ENCODE measurements at regions of chr4 and their contacts with region 1.

Region 1: DNA sequence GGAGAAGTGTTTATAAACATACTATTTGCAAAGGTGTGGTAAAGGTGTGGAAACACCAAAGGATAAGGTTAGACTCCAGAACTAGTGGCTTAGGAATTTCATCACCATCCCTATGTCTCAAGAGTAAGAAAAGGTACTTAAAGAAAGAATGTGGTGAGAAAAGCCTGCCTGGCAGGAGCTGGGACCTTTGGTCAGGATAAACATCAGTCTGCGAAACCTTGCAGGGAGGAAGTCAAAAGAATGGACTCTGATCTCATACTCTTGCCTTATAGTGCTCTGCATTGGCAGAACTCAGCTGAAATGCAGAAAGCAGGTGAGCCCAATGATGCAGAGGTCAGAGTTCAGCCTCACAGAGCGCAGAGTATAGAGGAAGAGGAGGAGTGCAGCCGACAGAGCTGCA is 97.2 kb upstream of the NR3C2 start:
- DNase-seq: no peak
- ATAC-seq: no peak
- H3K4me3 ChIP-seq: no peak overlapping the region
- H3K4me3 Mint-ChIP-seq: no peak overlapping the region
- H3K27ac ChIP-seq: no peak overlapping the region
- H3K27ac Mint-ChIP-seq: no peak overlapping the region
- H3K4me1 ChIP-seq: no peaks in the 10 kb centered on the region
- H3K4me1 Mint-ChIP-seq: no peaks in the 10 kb centered on the region
- H3K27me3 ChIP-seq: no peaks in the 10 kb centered on the region
- H3K27me3 Mint-ChIP-seq: no peaks in the 10 kb centered on the region

Region 2: DNA sequence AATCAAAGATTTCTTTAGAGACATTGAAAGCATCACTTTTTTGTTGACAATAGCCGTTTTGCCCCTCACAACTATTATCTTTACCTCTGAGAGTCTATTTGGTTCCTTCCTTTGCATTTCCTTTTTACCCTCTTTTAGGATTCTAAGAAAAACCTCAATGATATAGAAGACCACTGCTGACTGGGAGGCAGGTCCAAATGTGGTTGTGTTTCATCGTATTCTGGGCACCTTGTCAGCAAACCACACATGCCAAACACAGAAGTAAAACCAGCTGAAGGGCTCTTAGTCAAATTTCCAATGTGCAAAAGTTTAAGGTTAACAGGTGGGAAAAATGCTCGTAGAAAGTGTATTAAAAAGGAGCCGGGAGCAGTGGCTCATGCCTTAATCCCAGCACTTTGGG is 850.3 kb before region 1 on chr4:
- CTCF ChIA-PET with region 1: no interaction called
- POLR2A ChIA-PET with region 1: interaction called in 1 of 2 experiments, 17 read pairs
- DNase-seq: no peak
- ATAC-seq: no peak
- H3K4me3 ChIP-seq: no peak overlapping the region
- H3K4me3 Mint-ChIP-seq: no peak overlapping the region
- H3K27ac ChIP-seq: peak overlapping the region; percentile 12
- H3K27ac Mint-ChIP-seq: peak overlapping the region; percentile 16 to 37
- H3K4me1 ChIP-seq: peaks cover 0 to 3% of the 10 kb centered on the region in 2 experiments
- H3K4me1 Mint-ChIP-seq: peaks cover 0 to 14% (median 9%) of the 10 kb centered on the region in 3 donors
- H3K27me3 ChIP-seq: peaks cover 0 to 18% of the 10 kb centered on the region in 2 experiments
- H3K27me3 Mint-ChIP-seq: peaks cover 27 to 39% of the 10 kb centered on the region in 2 donors

Measured in T-cell (primary cell).